ENCODE measurements at regions of chr1 and their contacts with region 1.

Region 1: GRCh38 chr1:156054500-156055280 is at the start of gene LAMTOR2:
- DNase-seq: peak; percentile 98
- H3K4me3 ChIP-seq: peak within 1 kb of the TSS; percentile 57 to 78 (median 74)
- H3K27ac ChIP-seq: peak within 1 kb of the TSS; percentile 95
- H3K4me1 ChIP-seq: peaks cover 15% of the 10 kb centered on the region
- H3K27me3 ChIP-seq: no peaks in the 10 kb centered on the region
- CTCF ChIP-seq: no peak
- POLR2A ChIP-seq: peak; percentile 78
- total RNA-seq, gene LAMTOR2: 77.7 and 80.3 TPM in 2 replicates

Region 2: GRCh38 chr1:155940531-155940992 is 114.1 kb before region 1 on chr1:
- CTCF ChIA-PET with region 1: interaction called, 3 read pairs
- POLR2A ChIA-PET with region 1: no interaction called
- dilution Hi-C with region 1: no loop called
- intact Hi-C with region 1: loop called (anchors 1 kb)
- DNase-seq: peak; percentile 84
- H3K4me3 ChIP-seq: peak overlapping the region in 1 of 3 experiments; percentile 21
- H3K27ac ChIP-seq: peak overlapping the region; percentile 90
- H3K4me1 ChIP-seq: peaks cover 28% of the 10 kb centered on the region
- H3K27me3 ChIP-seq: no peaks in the 10 kb centered on the region
- CTCF ChIP-seq: no peak
- POLR2A ChIP-seq: peak; percentile 87

Region 3: DNA sequence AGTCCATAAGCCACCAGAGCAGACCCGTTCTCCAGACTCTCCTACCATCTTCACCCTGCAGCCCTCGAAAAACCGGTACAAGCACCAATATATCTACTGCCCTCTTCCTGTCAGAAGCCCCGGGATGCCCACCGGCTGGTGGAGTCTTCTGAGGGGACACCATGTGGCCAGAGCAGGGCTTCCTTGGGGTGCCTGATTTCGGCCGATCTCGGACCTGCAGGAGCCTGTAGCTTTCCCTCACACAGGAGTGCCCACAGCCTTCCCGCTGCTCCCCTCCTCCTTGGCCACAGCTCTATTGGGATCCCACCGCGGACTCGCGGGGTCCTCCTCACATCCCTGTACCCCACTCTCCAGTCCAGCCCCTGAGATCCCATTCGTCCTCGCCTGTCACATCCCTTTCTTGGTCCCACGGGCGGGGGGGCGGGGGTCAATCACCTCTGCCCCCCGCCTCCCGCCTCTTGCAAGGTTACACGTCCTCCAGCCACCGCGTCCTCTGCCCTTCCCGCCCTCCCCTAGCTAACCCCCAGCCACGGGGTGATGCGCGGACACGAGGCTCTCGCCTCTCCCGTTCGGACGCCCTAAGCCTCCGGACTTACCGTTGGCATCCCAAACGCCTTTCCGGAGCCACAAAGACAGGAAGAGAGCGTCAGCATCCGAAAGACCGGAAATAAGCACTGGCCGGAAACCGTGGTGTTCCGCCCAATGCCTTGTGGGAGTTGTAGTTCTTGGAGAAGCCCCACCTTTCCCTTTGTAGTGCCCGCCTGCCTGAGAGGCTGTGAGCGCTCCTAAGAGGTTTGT is 34.2 kb before region 1 on chr1 and contains the start of gene SSR2:
- CTCF ChIA-PET with region 1: interaction called, 8 read pairs
- POLR2A ChIA-PET with region 1: no interaction called
- dilution Hi-C with region 1: no loop called
- intact Hi-C with region 1: loop called (anchors 1 kb)
- DNase-seq: peak; percentile 96
- H3K4me3 ChIP-seq: peak within 1 kb of the TSS; percentile 27 to 81 (median 78)
- H3K27ac ChIP-seq: peak within 1 kb of the TSS; percentile 44
- H3K4me1 ChIP-seq: peaks cover 10% of the 10 kb centered on the region
- H3K27me3 ChIP-seq: no peaks in the 10 kb centered on the region
- CTCF ChIP-seq: no peak
- POLR2A ChIP-seq: peak; percentile 97
- total RNA-seq, gene SSR2: 339 and 362 TPM in 2 replicates

Region 4: GRCh38 chr1:156025877-156026276 is 28.8 kb before region 1 on chr1:
- CTCF ChIA-PET with region 1: interaction called, 8 read pairs
- POLR2A ChIA-PET with region 1: no interaction called
- dilution Hi-C with region 1: no loop called
- intact Hi-C with region 1: loop called (anchors 1 kb)
- DNase-seq: peak; percentile 64
- H3K4me3 ChIP-seq: no peak overlapping the region
- H3K27ac ChIP-seq: no peak overlapping the region
- H3K4me1 ChIP-seq: peaks cover 3% of the 10 kb centered on the region
- H3K27me3 ChIP-seq: no peaks in the 10 kb centered on the region
- CTCF ChIP-seq: peak; percentile 70 to 90
- POLR2A ChIP-seq: no peak

Region 5: GRCh38 chr1:156082309-156083091 is 27.8 kb after region 1 on chr1 and contains the start of gene MEX3A:
- CTCF ChIA-PET with region 1: interaction called, 5 read pairs
- POLR2A ChIA-PET with region 1: no interaction called
- dilution Hi-C with region 1: no loop called
- intact Hi-C with region 1: loop called (anchors 1 kb)
- DNase-seq: peak; percentile 87
- H3K4me3 ChIP-seq: peak within 1 kb of the TSS; percentile 88 to 97 (median 91)
- H3K27ac ChIP-seq: peak within 1 kb of the TSS; percentile 52
- H3K4me1 ChIP-seq: peaks cover 30% of the 10 kb centered on the region
- H3K27me3 ChIP-seq: no peaks in the 10 kb centered on the region
- CTCF ChIP-seq: no peak
- POLR2A ChIP-seq: peak; percentile 67
- total RNA-seq, gene MEX3A: 23.6 and 26.6 TPM in 2 replicates

Region 6: DNA sequence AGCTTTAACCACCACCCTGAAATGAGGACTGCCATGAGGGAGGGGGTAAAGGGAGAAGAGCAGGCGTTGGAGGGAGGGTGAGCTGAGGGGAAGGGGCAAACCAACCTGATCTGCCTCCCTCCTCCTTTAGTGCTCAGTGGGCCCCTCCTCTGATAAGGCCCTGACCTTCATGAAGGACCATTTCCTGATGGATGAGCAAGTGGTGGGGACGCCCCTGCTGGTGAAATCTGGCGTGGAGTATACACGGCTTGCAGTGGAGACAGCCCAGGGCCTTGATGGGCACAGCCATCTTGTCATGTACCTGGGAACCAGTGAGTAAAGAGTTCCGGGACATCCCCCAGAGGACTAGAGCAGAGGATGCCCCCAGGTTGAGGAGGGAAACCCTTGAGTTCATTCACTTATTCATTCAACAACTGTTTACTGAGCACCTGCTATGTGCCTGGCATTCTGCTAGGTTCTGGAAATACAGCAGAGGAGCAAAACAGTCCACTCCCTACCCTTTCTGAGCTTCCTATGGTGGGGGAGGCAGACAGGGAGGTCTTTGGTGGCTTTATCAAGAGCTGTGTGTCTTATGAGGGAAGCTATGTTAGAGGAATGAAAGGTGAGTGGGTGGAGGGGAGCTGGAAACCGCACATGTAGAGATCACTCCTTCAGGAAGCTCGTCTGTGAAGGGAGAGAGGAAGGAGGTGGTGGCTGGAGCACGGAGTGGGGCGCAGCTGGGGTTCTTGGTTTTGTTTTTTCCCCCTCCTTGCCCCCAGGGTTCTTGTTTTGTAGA is 118.2 kb after region 1 on chr1:
- CTCF ChIA-PET with region 1: no interaction called
- POLR2A ChIA-PET with region 1: no interaction called
- dilution Hi-C with region 1: no loop called
- intact Hi-C with region 1: no loop called
- DNase-seq: no peak
- H3K4me3 ChIP-seq: no peak overlapping the region
- H3K27ac ChIP-seq: no peak overlapping the region
- H3K4me1 ChIP-seq: no peaks in the 10 kb centered on the region
- H3K27me3 ChIP-seq: no peaks in the 10 kb centered on the region
- CTCF ChIP-seq: no peak
- POLR2A ChIP-seq: no peak

Region 7: GRCh38 chr1:156435545-156436141 is 381.0 kb after region 1 on chr1:
- CTCF ChIA-PET with region 1: no interaction called
- POLR2A ChIA-PET with region 1: no interaction called
- dilution Hi-C with region 1: no loop called
- intact Hi-C with region 1: no loop called
- DNase-seq: no peak
- H3K4me3 ChIP-seq: peak overlapping the region in 1 of 3 experiments; percentile 30
- H3K27ac ChIP-seq: no peak overlapping the region
- H3K4me1 ChIP-seq: peaks cover 4% of the 10 kb centered on the region
- H3K27me3 ChIP-seq: peaks cover 92 to 97% of the 10 kb centered on the region in 2 experiments
- CTCF ChIP-seq: no peak
- POLR2A ChIP-seq: no peak